ENCODE measurements at regions of chr10 and their contacts with region 1.

Region 1: DNA sequence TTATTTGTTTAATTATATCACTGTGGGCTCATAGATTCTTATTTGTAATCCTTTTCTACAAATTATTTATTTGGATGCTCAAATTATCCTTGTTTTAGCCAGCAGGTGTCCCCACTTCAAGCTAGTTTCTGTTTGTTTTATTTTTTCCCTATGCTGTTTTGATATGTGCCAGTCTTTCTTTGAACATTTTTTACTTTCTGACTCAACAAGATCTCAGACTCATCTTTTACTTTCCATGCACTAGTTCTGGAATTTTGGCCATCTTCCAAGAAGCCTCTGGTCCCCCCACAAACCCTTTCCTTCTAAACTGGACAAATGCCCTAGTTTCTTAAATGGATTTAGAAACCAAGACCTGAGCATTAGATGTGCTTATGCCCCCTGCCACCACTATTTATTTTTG is 11.5 kb upstream of the MRPS16 start:
- DNase-seq: no peak
- CTCF ChIP-seq: peak; percentile 33

Region 2: GRCh38 chr10:73252445-73253224 is 11.3 kb before region 1 on chr10 and contains the start of gene MRPS16:
- CTCF ChIA-PET with region 1: interaction called, 23 read pairs
- POLR2A ChIA-PET with region 1: interaction called, 4 read pairs
- DNase-seq: peak; percentile 93
- CTCF ChIP-seq: no peak

Region 3: DNA sequence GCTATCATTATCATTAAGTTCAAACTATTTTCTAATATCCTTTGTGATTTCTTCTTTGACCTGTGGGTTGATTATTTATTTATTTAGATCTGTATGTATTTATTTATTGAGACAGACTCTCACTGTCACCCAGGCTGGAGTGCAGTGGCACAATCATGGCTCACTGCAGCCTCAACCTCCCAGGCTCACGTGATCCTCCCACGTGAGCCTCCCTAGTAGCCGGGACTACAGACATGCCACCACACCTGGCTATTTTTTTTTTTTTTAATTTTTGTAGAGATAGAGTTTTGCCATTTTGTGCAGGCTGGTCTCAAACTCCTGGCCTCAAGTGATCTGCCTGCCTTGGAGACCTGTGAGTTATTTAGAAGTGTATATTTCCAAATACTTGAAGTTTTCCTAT is 17.1 kb after region 1 on chr10:
- CTCF ChIA-PET with region 1: interaction called, 10 read pairs
- POLR2A ChIA-PET with region 1: no interaction called
- DNase-seq: no peak
- CTCF ChIP-seq: no peak

Measured in GM10248 (cell line).